CD8-positive, alpha-beta T cell (primary cell): ENCODE measurements at regions of chr6 and their contacts with region 1.

Region 1: DNA sequence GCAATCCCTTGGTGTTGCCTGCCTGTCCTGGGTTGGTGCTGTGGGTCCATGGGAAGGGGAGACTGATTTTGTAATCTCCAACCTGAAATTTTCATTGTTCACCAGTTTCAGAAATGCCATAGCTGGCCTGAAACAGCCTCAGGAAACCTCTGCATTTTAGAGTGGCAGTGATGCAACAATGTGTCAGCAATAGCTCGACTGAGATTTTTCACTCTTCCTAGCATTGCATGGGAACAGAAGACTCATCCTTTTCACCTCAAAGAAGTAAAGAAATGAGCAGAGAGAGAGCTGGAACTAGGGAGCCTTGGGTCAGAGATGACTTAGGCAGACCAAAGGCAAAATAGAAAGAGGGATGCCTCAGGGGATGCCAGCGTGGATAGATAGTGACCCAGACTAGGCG is 23.7 kb upstream of the TMEM14A start:
- DNase-seq: no peak
- ATAC-seq: no peak
- H3K4me3 ChIP-seq: no peak overlapping the region
- H3K4me3 Mint-ChIP-seq: no peak overlapping the region
- H3K27ac ChIP-seq: no peak overlapping the region
- H3K27ac Mint-ChIP-seq: no peak overlapping the region
- H3K4me1 ChIP-seq: no peaks in the 10 kb centered on the region
- H3K4me1 Mint-ChIP-seq: peaks cover 5% of the 10 kb centered on the region
- H3K27me3 ChIP-seq: no peaks in the 10 kb centered on the region
- H3K27me3 Mint-ChIP-seq: peaks cover 8% of the 10 kb centered on the region
- CTCF ChIP-seq: no peak

Region 2: DNA sequence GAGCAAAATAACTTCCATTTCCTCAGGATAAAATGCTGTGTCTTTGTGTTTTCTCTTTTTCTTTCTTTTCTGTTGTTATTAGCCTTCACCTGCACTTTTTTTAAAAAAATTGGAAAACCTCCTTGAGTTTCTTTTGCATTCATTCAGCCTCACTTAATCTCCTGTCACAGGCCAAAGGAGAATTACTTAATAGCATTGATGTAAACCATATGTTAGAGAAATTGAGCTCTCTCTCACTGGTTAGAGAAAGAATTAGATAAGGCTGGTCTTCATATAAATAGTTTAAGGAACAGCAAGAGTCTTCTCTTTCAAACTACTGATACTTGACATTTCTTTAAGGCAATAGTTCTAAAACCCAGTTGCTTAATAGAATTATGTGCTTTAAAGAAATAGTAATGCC is 1264.4 kb before region 1 on chr6:
- CTCF ChIA-PET with region 1: no interaction called
- POLR2A ChIA-PET with region 1: no interaction called
- intact Hi-C with region 1: no loop called
- DNase-seq: no peak
- ATAC-seq: no peak
- H3K4me3 ChIP-seq: no peak overlapping the region
- H3K4me3 Mint-ChIP-seq: no peak overlapping the region
- H3K27ac ChIP-seq: no peak overlapping the region
- H3K27ac Mint-ChIP-seq: no peak overlapping the region
- H3K4me1 ChIP-seq: no peaks in the 10 kb centered on the region
- H3K4me1 Mint-ChIP-seq: no peaks in the 10 kb centered on the region
- H3K27me3 ChIP-seq: no peaks in the 10 kb centered on the region
- H3K27me3 Mint-ChIP-seq: no peaks in the 10 kb centered on the region
- CTCF ChIP-seq: no peak

Region 3: DNA sequence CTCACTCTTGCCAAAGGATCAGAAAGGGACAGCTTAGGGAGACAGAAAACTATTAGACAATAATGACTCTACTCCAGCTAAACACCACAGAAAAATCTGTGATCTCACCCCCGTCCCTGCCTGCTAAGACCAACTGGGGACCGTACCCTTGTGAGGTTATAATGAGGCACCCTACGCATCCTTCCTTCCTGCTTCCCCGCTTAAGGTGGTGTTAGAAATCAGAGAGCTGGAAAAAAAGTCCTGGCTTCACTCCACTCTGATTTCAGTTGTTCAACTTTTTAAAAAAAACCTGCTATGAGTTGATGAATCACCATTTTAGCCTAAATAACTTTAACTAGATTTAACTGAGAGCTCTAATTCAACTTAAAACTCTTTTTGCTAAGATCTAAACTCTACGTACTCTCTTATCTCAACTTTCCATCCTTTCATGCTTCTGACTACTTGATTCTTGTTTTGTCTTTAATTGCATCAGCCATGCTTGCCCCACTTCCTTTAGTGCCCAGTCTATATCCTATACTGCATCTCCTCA is 12.1 kb before region 1 on chr6:
- CTCF ChIA-PET with region 1: interaction called, 19 read pairs
- POLR2A ChIA-PET with region 1: interaction called, 5 read pairs
- intact Hi-C with region 1: no loop called
- DNase-seq: no peak
- ATAC-seq: no peak
- H3K4me3 ChIP-seq: no peak overlapping the region
- H3K4me3 Mint-ChIP-seq: no peak overlapping the region
- H3K27ac ChIP-seq: no peak overlapping the region
- H3K27ac Mint-ChIP-seq: no peak overlapping the region
- H3K4me1 ChIP-seq: no peaks in the 10 kb centered on the region
- H3K4me1 Mint-ChIP-seq: peaks cover 4% of the 10 kb centered on the region
- H3K27me3 ChIP-seq: peaks cover 0 to 6% of the 10 kb centered on the region in 2 experiments
- H3K27me3 Mint-ChIP-seq: peaks cover 6% of the 10 kb centered on the region
- CTCF ChIP-seq: no peak